AG04449 (cell line): ENCODE measurements at regions of chr2 and their contacts with region 1.

Region 1: GRCh38 chr2:94986392-94986963 is 39.0 kb upstream of the MAL start:
- DNase-seq: peak; percentile 19
- H3K4me3 ChIP-seq: no peak overlapping the region
- CTCF ChIP-seq: peak; percentile 71

Region 2: GRCh38 chr2:94956797-94957391 is 29.6 kb before region 1 on chr2:
- CTCF ChIA-PET with region 1: interaction called, 10 read pairs
- POLR2A ChIA-PET with region 1: no interaction called
- DNase-seq: no peak
- H3K4me3 ChIP-seq: no peak overlapping the region
- CTCF ChIP-seq: peak; percentile 74

Region 3: GRCh38 chr2:94996305-94997100 is 10.0 kb after region 1 on chr2:
- CTCF ChIA-PET with region 1: interaction called, 14 read pairs
- POLR2A ChIA-PET with region 1: no interaction called
- DNase-seq: no peak
- H3K4me3 ChIP-seq: no peak overlapping the region
- CTCF ChIP-seq: no peak

Region 4: DNA sequence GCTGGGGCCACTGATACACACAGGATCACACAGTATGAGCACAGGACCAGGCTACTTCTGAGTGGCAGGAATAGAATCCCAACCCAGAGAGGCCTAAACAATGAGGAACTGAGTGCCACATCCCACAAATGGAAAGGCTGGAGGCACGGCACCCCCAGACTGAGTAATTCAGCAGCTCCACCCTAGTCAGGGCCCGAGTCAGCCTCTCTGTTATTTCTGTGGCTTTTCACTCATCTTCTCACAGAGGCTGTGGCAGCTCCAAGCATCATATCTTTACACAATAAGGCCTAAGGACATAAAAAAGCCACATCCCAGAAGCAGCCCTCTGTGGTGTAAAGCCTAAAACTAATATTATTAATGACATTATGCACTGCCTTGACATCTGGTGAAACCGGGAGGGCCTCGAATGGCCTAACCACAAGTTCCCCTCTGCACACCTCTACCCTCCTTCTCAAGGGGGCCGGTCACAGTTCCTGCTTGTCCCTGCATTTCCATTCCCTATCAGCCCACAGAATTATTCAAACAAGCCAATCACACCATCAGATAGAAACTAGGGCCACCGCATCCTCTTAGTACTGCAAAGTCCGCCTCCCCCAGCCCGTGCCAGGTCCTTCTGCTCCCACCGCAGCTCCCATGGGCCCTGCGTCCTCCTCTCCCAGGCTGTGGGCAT is 26.5 kb after region 1 on chr2:
- CTCF ChIA-PET with region 1: interaction called, 10 read pairs
- POLR2A ChIA-PET with region 1: no interaction called
- DNase-seq: no peak
- H3K4me3 ChIP-seq: no peak overlapping the region
- CTCF ChIP-seq: no peak

Region 5: DNA sequence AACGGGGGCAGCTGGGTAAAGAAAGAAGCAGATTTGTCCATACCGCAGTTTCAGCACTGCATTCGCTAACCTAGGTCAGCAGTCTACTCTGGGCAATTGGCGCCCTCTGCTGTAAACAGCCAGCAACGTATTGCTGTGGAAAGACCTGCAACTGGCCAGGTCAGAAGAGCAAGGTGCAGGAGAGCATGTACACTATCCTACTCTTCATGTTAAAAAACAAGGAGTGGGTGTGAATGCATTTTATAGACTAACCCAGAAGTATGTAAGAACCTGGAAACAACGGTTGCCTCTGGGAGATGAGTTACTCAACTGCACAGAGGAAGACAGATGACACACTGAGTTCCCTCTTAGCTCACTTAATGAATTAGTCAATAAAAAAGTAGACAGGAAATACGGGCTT is 128.9 kb after region 1 on chr2:
- CTCF ChIA-PET with region 1: interaction called, 10 read pairs
- POLR2A ChIA-PET with region 1: no interaction called
- DNase-seq: no peak
- H3K4me3 ChIP-seq: no peak overlapping the region
- CTCF ChIP-seq: peak; percentile 86